ENCODE measurements at regions of chr2 and their contacts with region 1.

Region 1: GRCh38 chr2:65416945-65417344 is 15.5 kb downstream of the SPRED2 start:
- DNase-seq: no peak
- H3K4me3 Mint-ChIP-seq: no peak overlapping the region
- H3K27ac Mint-ChIP-seq: peak overlapping the region; percentile 65
- H3K4me1 Mint-ChIP-seq: peaks cover 36% of the 10 kb centered on the region
- H3K27me3 Mint-ChIP-seq: peaks cover 6% of the 10 kb centered on the region

Region 2: GRCh38 chr2:65396348-65397026 is 20.5 kb before region 1 on chr2:
- intact Hi-C with region 1: loop called (anchors 2 kb)
- DNase-seq: no peak
- H3K4me3 Mint-ChIP-seq: no peak overlapping the region
- H3K27ac Mint-ChIP-seq: peak overlapping the region; percentile 50
- H3K4me1 Mint-ChIP-seq: peaks cover 47% of the 10 kb centered on the region
- H3K27me3 Mint-ChIP-seq: peaks cover 7% of the 10 kb centered on the region